ENCODE measurements at regions of chr2 and their contacts with region 1.

Region 1: GRCh38 chr2:23363831-23364230 is 21.1 kb upstream of the KLHL29 start:
- DNase-seq: no peak
- ATAC-seq: no peak
- H3K4me3 Mint-ChIP-seq: no peak overlapping the region
- H3K27ac Mint-ChIP-seq: no peak overlapping the region
- H3K4me1 Mint-ChIP-seq: no peaks in the 10 kb centered on the region
- H3K27me3 Mint-ChIP-seq: peaks cover 29% of the 10 kb centered on the region
- CTCF ChIP-seq: no peak

Region 2: GRCh38 chr2:23268467-23269263 is 95.2 kb before region 1 on chr2:
- CTCF ChIA-PET with region 1: no interaction called
- POLR2A ChIA-PET with region 1: no interaction called
- intact Hi-C with region 1: no loop called
- DNase-seq: no peak
- ATAC-seq: no peak
- H3K4me3 Mint-ChIP-seq: no peak overlapping the region
- H3K27ac Mint-ChIP-seq: no peak overlapping the region
- H3K4me1 Mint-ChIP-seq: no peaks in the 10 kb centered on the region
- H3K27me3 Mint-ChIP-seq: peaks cover 9% of the 10 kb centered on the region
- CTCF ChIP-seq: no peak

Region 3: GRCh38 chr2:23330214-23330613 is 33.6 kb before region 1 on chr2:
- CTCF ChIA-PET with region 1: no interaction called
- POLR2A ChIA-PET with region 1: no interaction called
- intact Hi-C with region 1: no loop called
- DNase-seq: peak; percentile 11
- ATAC-seq: no peak
- H3K4me3 Mint-ChIP-seq: no peak overlapping the region
- H3K27ac Mint-ChIP-seq: no peak overlapping the region
- H3K4me1 Mint-ChIP-seq: no peaks in the 10 kb centered on the region
- H3K27me3 Mint-ChIP-seq: peaks cover 11% of the 10 kb centered on the region
- CTCF ChIP-seq: no peak

Region 4: DNA sequence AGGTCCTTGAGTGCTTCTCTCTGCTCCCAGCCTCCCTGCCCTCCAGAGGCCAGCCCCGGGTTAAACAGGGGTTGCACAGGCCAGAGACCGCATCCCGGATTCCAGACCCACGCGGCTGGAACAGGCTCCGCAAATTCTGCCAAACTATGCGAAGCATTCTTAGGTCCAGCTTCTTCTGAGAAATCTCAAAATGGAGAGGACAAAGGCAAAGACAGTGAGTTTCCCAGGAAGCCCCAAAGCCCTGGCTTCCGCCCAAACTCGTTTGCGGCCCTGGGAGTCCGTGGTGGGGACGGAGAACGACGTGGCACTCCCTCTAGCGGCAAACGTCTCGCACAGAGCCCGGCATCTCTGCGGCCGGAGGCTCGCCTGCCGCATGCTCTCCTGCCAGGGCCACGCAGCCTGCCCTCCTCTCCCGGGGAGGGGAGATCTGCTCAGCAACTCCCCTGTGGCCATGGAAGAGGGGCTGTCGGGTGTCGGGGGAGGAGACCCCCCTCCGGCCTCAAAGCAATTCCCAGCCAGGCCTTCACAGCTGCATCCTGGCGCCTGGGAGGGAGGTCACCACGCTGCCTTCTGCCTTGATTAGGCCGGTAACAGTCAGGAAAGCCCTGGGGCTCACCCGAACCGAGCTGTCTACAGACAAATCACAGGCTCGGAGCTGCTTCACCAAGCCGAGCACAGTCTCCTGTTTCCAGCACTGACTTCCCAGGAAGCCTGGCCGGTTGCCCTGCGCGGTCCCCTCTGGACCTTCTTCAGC is 12.3 kb before region 1 on chr2:
- CTCF ChIA-PET with region 1: interaction called, 18 read pairs
- POLR2A ChIA-PET with region 1: no interaction called
- intact Hi-C with region 1: no loop called
- DNase-seq: peak; percentile 67
- ATAC-seq: peak; percentile 90
- H3K4me3 Mint-ChIP-seq: no peak overlapping the region
- H3K27ac Mint-ChIP-seq: no peak overlapping the region
- H3K4me1 Mint-ChIP-seq: no peaks in the 10 kb centered on the region
- H3K27me3 Mint-ChIP-seq: peaks cover 21% of the 10 kb centered on the region
- CTCF ChIP-seq: peak; percentile 75